ENCODE measurements at regions of chr1 and their contacts with region 1.

Region 1: DNA sequence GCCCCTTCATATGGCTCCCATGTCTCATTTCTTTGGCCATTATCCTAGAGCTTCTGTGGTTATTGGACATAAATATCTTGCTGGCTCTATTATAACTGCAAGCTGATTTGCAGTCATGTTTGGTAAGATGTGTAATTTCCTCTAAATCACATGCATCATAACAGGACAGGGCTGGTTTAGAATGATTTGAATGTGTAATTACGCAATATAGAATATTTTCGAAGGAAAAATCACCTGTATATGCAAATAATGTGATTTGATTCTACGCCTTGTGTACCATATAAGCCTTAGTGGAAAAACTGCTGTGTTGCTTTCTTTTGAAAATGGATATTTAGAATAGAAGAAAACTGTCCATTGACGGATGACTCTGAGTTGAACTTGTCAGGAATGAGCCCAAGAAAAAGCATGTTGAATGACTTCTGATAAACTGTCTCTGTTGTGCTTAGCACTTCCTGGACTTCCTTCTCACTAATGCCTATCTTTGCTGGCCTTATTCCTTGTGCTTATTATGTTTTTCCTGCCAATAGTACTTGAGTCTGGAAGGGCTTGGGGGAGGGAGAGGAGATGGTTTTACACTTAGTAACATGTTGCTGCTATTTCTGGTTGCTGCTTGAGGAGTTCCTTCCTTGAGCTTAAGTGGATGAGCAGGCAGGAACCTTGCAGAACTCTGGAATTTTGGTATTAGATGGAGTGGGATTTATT is 6.5 kb downstream of the CACHD1 start:
- DNase-seq: peak; percentile 50
- H3K4me3 ChIP-seq: no peak overlapping the region
- H3K27ac ChIP-seq: no peak overlapping the region
- H3K27me3 ChIP-seq: no peaks in the 10 kb centered on the region
- CTCF ChIP-seq: no peak

Region 2: GRCh38 chr1:64775113-64775512 is 298.7 kb after region 1 on chr1:
- CTCF ChIA-PET with region 1: interaction called, 12 read pairs
- POLR2A ChIA-PET with region 1: no interaction called
- DNase-seq: no peak
- H3K4me3 ChIP-seq: no peak overlapping the region
- H3K27ac ChIP-seq: no peak overlapping the region
- H3K27me3 ChIP-seq: no peaks in the 10 kb centered on the region
- CTCF ChIP-seq: no peak